Naive thymus-derived CD4-positive, alpha-beta T cell (primary cell): ENCODE measurements at regions of chr10 and their contacts with region 1.

Region 1: GRCh38 chr10:17029581-17030271 is 99.9 kb downstream of the CUBN start:
- DNase-seq: peak; percentile 31 to 82 (median 50)
- ATAC-seq: peak; percentile 69
- H3K4me3 ChIP-seq: peak overlapping the region; percentile 46
- H3K4me3 Mint-ChIP-seq: peak overlapping the region; percentile 64 to 87 (median 83)
- H3K27ac ChIP-seq: peak overlapping the region; percentile 70
- H3K27ac Mint-ChIP-seq: peak overlapping the region; percentile 75 to 97 (median 93)
- H3K4me1 ChIP-seq: peaks cover 52 to 53% of the 10 kb centered on the region in 2 donors
- H3K4me1 Mint-ChIP-seq: peaks cover 33 to 88% (median 81%) of the 10 kb centered on the region in 7 donors
- H3K27me3 ChIP-seq: no peaks in the 10 kb centered on the region
- H3K27me3 Mint-ChIP-seq: peaks cover 0 to 7% (median 0%) of the 10 kb centered on the region in 5 donors

Region 2: GRCh38 chr10:16445770-16446469 is 583.8 kb before region 1 on chr10:
- CTCF ChIA-PET with region 1: no interaction called
- POLR2A ChIA-PET with region 1: no interaction called
- intact Hi-C with region 1: no loop called
- DNase-seq: no peak
- ATAC-seq: no peak
- H3K4me3 ChIP-seq: no peak overlapping the region
- H3K4me3 Mint-ChIP-seq: no peak overlapping the region
- H3K27ac ChIP-seq: no peak overlapping the region
- H3K27ac Mint-ChIP-seq: no peak overlapping the region
- H3K4me1 ChIP-seq: peaks cover under 1 to 7% of the 10 kb centered on the region in 2 donors
- H3K4me1 Mint-ChIP-seq: peaks cover 7 to 48% (median 43%) of the 10 kb centered on the region in 7 donors
- H3K27me3 ChIP-seq: no peaks in the 10 kb centered on the region
- H3K27me3 Mint-ChIP-seq: no peaks in the 10 kb centered on the region

Region 3: GRCh38 chr10:16950656-16951601 is 78.8 kb before region 1 on chr10:
- CTCF ChIA-PET with region 1: no interaction called
- POLR2A ChIA-PET with region 1: no interaction called
- intact Hi-C with region 1: loop called in 1 of 2 experiments (anchors 5 kb)
- DNase-seq: peak in 2 of 9 donors; percentile 5 to 33
- ATAC-seq: no peak
- H3K4me3 ChIP-seq: no peak overlapping the region
- H3K4me3 Mint-ChIP-seq: no peak overlapping the region
- H3K27ac ChIP-seq: no peak overlapping the region
- H3K27ac Mint-ChIP-seq: peak overlapping the region in 1 of 9 donors; percentile 41
- H3K4me1 ChIP-seq: no peaks in the 10 kb centered on the region
- H3K4me1 Mint-ChIP-seq: peaks cover 10 to 29% (median 22%) of the 10 kb centered on the region in 7 donors
- H3K27me3 ChIP-seq: no peaks in the 10 kb centered on the region
- H3K27me3 Mint-ChIP-seq: peaks cover 0 to 14% (median 0%) of the 10 kb centered on the region in 5 donors

Region 4: GRCh38 chr10:17001961-17002749 is 27.6 kb before region 1 on chr10:
- CTCF ChIA-PET with region 1: no interaction called
- POLR2A ChIA-PET with region 1: interaction called, 6 read pairs
- intact Hi-C with region 1: loop called in 1 of 2 experiments (anchors 1 kb)
- DNase-seq: peak in 5 of 9 donors; percentile 25 to 79 (median 38)
- ATAC-seq: peak; percentile 59
- H3K4me3 ChIP-seq: no peak overlapping the region
- H3K4me3 Mint-ChIP-seq: peak overlapping the region in 9 of 10 donors; percentile 30 to 69 (median 63)
- H3K27ac ChIP-seq: peak overlapping the region; percentile 67
- H3K27ac Mint-ChIP-seq: peak overlapping the region; percentile 65 to 98 (median 85)
- H3K4me1 ChIP-seq: peaks cover 20 to 35% of the 10 kb centered on the region in 2 donors
- H3K4me1 Mint-ChIP-seq: peaks cover 21 to 79% (median 57%) of the 10 kb centered on the region in 7 donors
- H3K27me3 ChIP-seq: no peaks in the 10 kb centered on the region
- H3K27me3 Mint-ChIP-seq: peaks cover 0 to 66% (median 0%) of the 10 kb centered on the region in 5 donors

Region 5: GRCh38 chr10:17041626-17042520 is 12.1 kb after region 1 on chr10:
- CTCF ChIA-PET with region 1: interaction called, 3 read pairs
- POLR2A ChIA-PET with region 1: no interaction called
- intact Hi-C with region 1: loop called in 1 of 2 experiments (anchors 2 kb)
- DNase-seq: no peak
- ATAC-seq: no peak
- H3K4me3 ChIP-seq: no peak overlapping the region
- H3K4me3 Mint-ChIP-seq: no peak overlapping the region
- H3K27ac ChIP-seq: no peak overlapping the region
- H3K27ac Mint-ChIP-seq: no peak overlapping the region
- H3K4me1 ChIP-seq: no peaks in the 10 kb centered on the region
- H3K4me1 Mint-ChIP-seq: peaks cover 0 to 5% (median 0%) of the 10 kb centered on the region in 7 donors
- H3K27me3 ChIP-seq: no peaks in the 10 kb centered on the region
- H3K27me3 Mint-ChIP-seq: no peaks in the 10 kb centered on the region

Region 6: DNA sequence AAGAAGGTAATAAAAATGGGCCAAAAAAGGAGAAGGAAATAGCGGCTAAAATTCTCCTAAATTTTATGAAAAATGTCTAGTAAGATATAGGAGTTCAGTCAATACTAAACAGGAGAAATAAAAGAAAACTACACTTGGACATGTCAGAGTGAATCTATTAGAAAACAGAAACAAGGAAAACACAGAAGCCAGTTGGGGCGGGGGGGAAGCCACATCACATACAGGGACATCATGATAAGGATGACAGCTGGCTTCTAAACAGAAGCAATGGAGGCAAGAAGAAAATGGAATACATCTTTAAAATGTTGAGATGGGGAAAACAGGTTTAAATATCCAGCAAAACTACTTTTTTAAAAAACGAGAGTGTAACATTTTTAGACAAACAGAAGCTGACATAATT is 22.1 kb after region 1 on chr10:
- CTCF ChIA-PET with region 1: no interaction called
- POLR2A ChIA-PET with region 1: no interaction called
- intact Hi-C with region 1: loop called in 1 of 2 experiments (anchors 1 kb)
- DNase-seq: no peak
- ATAC-seq: no peak
- H3K4me3 ChIP-seq: no peak overlapping the region
- H3K4me3 Mint-ChIP-seq: no peak overlapping the region
- H3K27ac ChIP-seq: no peak overlapping the region
- H3K27ac Mint-ChIP-seq: peak overlapping the region in 1 of 9 donors; percentile 3
- H3K4me1 ChIP-seq: no peaks in the 10 kb centered on the region
- H3K4me1 Mint-ChIP-seq: peaks cover 0 to 6% (median 0%) of the 10 kb centered on the region in 7 donors
- H3K27me3 ChIP-seq: no peaks in the 10 kb centered on the region
- H3K27me3 Mint-ChIP-seq: peaks cover 0 to 4% (median 0%) of the 10 kb centered on the region in 5 donors

Region 7: DNA sequence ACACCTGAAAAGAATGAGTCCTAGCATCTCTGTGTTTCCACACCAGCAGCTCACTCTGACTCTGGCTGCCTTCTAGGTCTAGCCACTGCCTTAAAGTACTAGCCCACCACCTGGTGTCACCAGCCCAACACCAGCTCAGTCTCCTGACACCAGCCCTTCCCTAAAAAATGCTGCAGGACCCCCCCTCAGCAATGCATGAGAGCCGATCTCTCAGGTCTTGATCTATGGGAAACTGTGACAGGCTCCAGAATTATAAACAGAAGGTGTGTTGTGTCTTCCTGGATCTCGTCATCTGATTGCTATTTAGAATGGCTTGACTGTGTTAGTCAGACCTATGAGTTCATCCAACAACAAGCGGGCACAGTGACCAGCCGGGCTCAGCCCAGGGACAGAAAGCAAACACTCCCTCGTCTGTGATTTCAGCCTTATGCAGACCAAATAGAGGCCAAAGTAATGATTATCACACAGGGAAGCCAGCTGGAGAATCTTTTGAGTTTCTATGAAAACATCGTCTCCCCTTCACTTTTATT is 33.3 kb after region 1 on chr10:
- CTCF ChIA-PET with region 1: no interaction called
- POLR2A ChIA-PET with region 1: no interaction called
- intact Hi-C with region 1: loop called in 1 of 2 experiments (anchors 1 kb)
- DNase-seq: no peak
- ATAC-seq: no peak
- H3K4me3 ChIP-seq: no peak overlapping the region
- H3K4me3 Mint-ChIP-seq: no peak overlapping the region
- H3K27ac ChIP-seq: no peak overlapping the region
- H3K27ac Mint-ChIP-seq: peak overlapping the region in 5 of 9 donors; percentile 20 to 83 (median 67)
- H3K4me1 ChIP-seq: peaks cover 0 to 6% of the 10 kb centered on the region in 2 donors
- H3K4me1 Mint-ChIP-seq: peaks cover 8 to 45% (median 39%) of the 10 kb centered on the region in 7 donors
- H3K27me3 ChIP-seq: no peaks in the 10 kb centered on the region
- H3K27me3 Mint-ChIP-seq: peaks cover 0 to 15% (median 0%) of the 10 kb centered on the region in 5 donors